Panc1 (cell line): ENCODE measurements at regions of chr2 and their contacts with region 1.

Region 1: DNA sequence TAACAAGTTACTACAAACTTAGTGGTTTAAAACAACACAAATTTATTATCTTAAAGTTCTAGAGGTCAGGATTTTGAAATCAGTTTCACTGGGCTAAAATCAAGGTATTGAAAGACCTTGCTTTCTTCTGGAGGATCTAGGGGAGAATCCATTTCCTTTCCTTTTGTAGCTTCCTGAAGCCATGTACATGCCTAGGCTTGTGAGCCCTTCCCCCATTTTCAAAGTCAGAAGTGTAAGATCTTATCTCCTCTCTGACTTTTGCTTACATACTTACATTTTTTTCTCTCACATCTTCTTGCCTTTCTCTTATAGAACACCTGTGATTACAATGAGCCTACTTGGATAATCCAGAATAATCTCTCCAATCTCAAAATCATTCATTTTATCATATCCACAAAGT is 78.7 kb upstream of the MBOAT2 start:
- DNase-seq: no peak
- ATAC-seq: no peak
- H3K4me3 ChIP-seq: no peak overlapping the region
- H3K27ac ChIP-seq: no peak overlapping the region
- H3K4me1 ChIP-seq: no peaks in the 10 kb centered on the region
- H3K27me3 ChIP-seq: no peaks in the 10 kb centered on the region
- CTCF ChIP-seq: no peak

Region 2: DNA sequence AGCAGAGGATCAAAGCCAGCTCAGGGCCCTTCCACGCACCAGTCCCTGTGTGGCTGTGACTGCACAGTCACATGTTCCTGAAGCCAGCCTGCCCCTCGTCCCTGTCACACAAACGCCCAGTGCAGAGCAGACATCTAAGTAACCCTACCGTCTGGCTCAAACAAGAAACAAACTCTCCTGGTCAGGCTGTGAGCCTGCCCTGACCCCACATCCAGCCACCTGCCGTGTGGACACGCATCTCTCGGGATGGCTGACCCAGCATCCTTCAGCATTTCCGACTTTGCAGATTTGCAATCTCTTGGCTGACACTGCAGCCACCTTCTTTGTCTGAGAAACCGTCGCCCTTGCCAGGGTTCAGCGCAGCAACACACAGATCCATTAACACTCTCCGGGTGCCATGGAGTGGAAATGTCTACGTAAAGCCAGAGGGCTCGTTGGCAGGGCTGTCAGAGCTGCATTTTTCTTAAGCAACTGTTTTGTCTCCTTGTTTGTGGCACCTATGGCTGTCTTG is 42.1 kb after region 1 on chr2:
- CTCF ChIA-PET with region 1: no interaction called
- POLR2A ChIA-PET with region 1: no interaction called
- in situ Hi-C with region 1: no loop called
- intact Hi-C with region 1: no loop called
- DNase-seq: no peak
- ATAC-seq: no peak
- H3K4me3 ChIP-seq: no peak overlapping the region
- H3K27ac ChIP-seq: no peak overlapping the region
- H3K4me1 ChIP-seq: no peaks in the 10 kb centered on the region
- H3K27me3 ChIP-seq: no peaks in the 10 kb centered on the region
- CTCF ChIP-seq: no peak

Region 3: DNA sequence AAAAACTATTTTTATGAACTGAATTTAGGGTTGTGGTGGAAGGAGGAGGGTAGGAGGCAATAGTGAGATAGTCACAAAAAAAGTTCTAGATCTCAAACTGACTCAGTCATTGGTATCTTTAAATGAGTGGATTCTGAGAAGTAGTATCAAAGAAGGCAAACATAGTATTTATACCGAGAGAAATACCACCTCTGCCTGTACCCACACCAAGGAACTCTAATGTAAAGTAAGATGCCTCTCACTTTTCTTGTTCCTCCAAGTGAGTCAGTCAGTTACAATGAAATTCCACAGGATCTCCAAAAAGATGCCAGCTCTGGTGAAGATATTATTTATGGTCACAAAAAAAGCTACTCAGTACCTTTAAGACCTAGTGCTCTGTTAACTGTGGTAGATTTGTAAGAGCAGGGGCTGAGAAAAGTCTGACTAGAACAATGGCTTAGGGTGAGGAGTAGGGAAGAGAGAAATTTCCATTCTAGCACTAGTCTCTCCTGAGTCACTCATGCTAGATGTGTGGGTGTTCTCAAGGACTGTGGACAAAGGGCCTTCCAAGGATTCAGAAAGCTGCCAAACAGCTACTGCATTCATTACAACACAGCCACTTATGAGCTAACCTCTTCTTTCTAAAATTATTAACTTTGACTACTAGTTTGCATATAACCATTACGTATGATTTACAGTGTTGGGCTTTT is 512.4 kb after region 1 on chr2:
- CTCF ChIA-PET with region 1: no interaction called
- POLR2A ChIA-PET with region 1: interaction called, 11 read pairs
- in situ Hi-C with region 1: no loop called
- intact Hi-C with region 1: no loop called
- DNase-seq: no peak
- ATAC-seq: peak; percentile 78
- H3K4me3 ChIP-seq: no peak overlapping the region
- H3K27ac ChIP-seq: peak overlapping the region; percentile 70
- H3K4me1 ChIP-seq: peaks cover 35% of the 10 kb centered on the region
- H3K27me3 ChIP-seq: no peaks in the 10 kb centered on the region
- CTCF ChIP-seq: no peak